ENCODE measurements at regions of chr1 and their contacts with region 1.

Region 1: GRCh38 chr1:234114648-234115307 is 210.3 kb downstream of the SLC35F3 start:
- DNase-seq: peak; percentile 61
- H3K4me3 ChIP-seq: peak overlapping the region; percentile 28 to 40 (median 33)
- H3K27ac ChIP-seq: peak overlapping the region; percentile 56
- H3K4me1 ChIP-seq: peaks cover 8% of the 10 kb centered on the region
- H3K27me3 ChIP-seq: no peaks in the 10 kb centered on the region
- CTCF ChIP-seq: peak; percentile 67

Region 2: GRCh38 chr1:233304489-233305102 is 810.2 kb before region 1 on chr1:
- CTCF ChIA-PET with region 1: no interaction called
- dilution Hi-C with region 1: no loop called
- in situ Hi-C with region 1: no loop called
- intact Hi-C with region 1: loop called (anchors 1 kb)
- DNase-seq: peak; percentile 17
- H3K4me3 ChIP-seq: no peak overlapping the region
- H3K27ac ChIP-seq: no peak overlapping the region
- H3K4me1 ChIP-seq: no peaks in the 10 kb centered on the region
- H3K27me3 ChIP-seq: peaks cover 2% of the 10 kb centered on the region
- CTCF ChIP-seq: peak; percentile 77 to 80

Region 3: GRCh38 chr1:234072793-234073192 is 42.0 kb before region 1 on chr1:
- CTCF ChIA-PET with region 1: no interaction called
- dilution Hi-C with region 1: no loop called
- in situ Hi-C with region 1: no loop called
- intact Hi-C with region 1: no loop called
- DNase-seq: no peak
- H3K4me3 ChIP-seq: no peak overlapping the region
- H3K27ac ChIP-seq: no peak overlapping the region
- H3K4me1 ChIP-seq: no peaks in the 10 kb centered on the region
- H3K27me3 ChIP-seq: no peaks in the 10 kb centered on the region
- CTCF ChIP-seq: no peak

Region 4: GRCh38 chr1:234154320-234155251 is 39.8 kb after region 1 on chr1:
- CTCF ChIA-PET with region 1: no interaction called
- dilution Hi-C with region 1: no loop called
- in situ Hi-C with region 1: no loop called
- intact Hi-C with region 1: loop called (anchors 1 kb)
- DNase-seq: peak; percentile 73
- H3K4me3 ChIP-seq: no peak overlapping the region
- H3K27ac ChIP-seq: no peak overlapping the region
- H3K4me1 ChIP-seq: peaks cover 3% of the 10 kb centered on the region
- H3K27me3 ChIP-seq: no peaks in the 10 kb centered on the region
- CTCF ChIP-seq: peak; percentile 73 to 80

Region 5: DNA sequence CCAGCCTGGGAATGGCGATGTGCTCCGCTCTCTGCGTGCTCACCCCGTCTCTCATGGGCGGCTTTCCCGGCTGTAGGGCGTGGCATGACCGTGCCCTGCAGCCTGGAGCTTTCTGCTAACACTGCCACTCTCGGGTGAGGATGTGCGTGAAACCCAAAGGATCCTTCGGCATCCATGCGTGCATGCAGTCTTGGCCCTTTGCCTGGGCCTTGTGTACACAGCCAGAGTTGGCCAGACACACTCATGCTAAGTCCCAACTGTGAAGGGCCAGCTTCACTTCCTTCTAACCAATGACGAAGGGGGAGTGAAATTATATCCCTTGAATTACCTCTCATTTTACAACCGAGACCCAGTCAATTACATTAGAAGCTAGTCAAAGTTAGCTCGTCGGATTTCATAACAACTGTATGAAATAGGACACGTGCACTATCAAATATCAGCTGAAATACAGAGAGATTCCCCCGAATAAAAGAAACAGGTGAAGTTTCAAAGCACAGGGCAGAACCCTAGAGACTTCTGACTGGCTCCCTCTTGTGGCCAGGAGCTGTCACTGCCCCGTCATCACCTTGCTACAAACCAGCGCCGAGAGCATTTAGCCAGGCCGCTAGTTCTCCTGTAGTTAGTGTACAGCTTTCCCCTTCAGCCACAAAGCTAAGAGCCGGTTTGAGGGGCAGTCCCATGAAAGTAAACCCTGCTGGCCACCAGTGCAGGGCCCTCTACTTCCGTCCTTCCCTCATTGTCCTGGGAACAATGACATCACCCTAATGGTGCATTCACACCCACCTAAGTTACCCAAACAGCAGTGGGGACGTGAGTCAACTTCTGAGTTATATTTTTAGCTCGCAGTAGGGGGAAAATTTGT is 195.1 kb after region 1 on chr1:
- CTCF ChIA-PET with region 1: no interaction called
- dilution Hi-C with region 1: no loop called
- in situ Hi-C with region 1: no loop called
- intact Hi-C with region 1: loop called (anchors 1 kb)
- DNase-seq: peak; percentile 59
- H3K4me3 ChIP-seq: no peak overlapping the region
- H3K27ac ChIP-seq: no peak overlapping the region
- H3K4me1 ChIP-seq: peaks cover 22% of the 10 kb centered on the region
- H3K27me3 ChIP-seq: no peaks in the 10 kb centered on the region
- CTCF ChIP-seq: peak; percentile 90 to 97

Region 6: GRCh38 chr1:234342774-234343173 is 228.0 kb after region 1 on chr1:
- CTCF ChIA-PET with region 1: no interaction called
- dilution Hi-C with region 1: no loop called
- in situ Hi-C with region 1: no loop called
- intact Hi-C with region 1: no loop called
- DNase-seq: no peak
- H3K4me3 ChIP-seq: no peak overlapping the region
- H3K27ac ChIP-seq: no peak overlapping the region
- H3K4me1 ChIP-seq: no peaks in the 10 kb centered on the region
- H3K27me3 ChIP-seq: no peaks in the 10 kb centered on the region
- CTCF ChIP-seq: no peak

Region 7: DNA sequence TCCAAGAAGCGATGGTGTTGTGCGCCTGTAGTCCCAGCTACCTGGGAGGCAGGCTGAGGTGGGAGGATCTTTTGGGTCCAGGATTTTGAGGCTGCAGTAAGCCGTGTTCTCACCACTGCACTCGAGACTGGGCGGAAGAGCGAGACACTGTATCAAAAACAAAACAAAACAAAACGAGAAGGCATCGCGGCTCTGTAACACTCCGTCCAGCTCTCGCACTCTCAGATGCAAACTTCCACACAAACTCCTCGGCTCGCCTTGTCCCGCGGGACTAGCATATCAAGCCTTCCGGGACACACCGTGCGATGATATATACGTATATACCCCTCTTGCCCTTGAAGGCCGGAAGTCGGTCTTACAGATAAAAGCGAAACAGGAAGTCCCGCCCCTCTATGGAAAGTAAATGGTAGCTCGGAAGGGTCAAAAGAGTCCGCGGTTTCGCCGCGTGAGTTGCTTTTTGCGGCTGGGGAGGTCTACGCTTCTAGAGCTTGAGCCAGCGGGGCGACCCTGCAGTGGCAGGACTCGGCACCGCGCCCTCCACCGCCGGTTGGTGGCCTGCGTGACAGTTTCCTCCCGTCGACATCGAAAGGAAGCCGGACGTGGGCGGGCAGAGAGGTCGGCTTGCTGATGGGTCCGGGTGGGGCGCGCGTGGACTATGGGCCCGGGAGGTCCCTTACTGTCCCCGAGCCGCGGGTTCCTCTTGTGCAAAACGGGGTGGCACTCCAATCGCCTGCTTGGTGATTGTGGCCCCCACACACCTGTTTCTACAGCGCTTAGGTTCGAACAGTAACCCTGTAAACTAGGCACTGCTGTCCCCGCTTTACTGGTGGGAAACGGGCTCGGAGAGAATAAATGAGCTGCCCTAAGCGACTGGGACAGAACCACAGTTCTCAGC is 258.5 kb after region 1 on chr1 and contains the start of gene COA6:
- CTCF ChIA-PET with region 1: no interaction called
- dilution Hi-C with region 1: no loop called
- in situ Hi-C with region 1: no loop called
- intact Hi-C with region 1: loop called (anchors 2 kb)
- DNase-seq: peak; percentile 96
- H3K4me3 ChIP-seq: peak within 1 kb of the TSS; percentile 74 to 93 (median 91)
- H3K27ac ChIP-seq: peak within 1 kb of the TSS; percentile 88
- H3K4me1 ChIP-seq: peaks cover 14% of the 10 kb centered on the region
- H3K27me3 ChIP-seq: no peaks in the 10 kb centered on the region
- CTCF ChIP-seq: no peak
- total RNA-seq, gene COA6: 10.3 to 43.4 TPM

Region 8: GRCh38 chr1:235093696-235094592 is 979.2 kb after region 1 on chr1:
- CTCF ChIA-PET with region 1: no interaction called
- dilution Hi-C with region 1: no loop called
- in situ Hi-C with region 1: loop called in 1 of 2 experiments (anchors 25 kb)
- intact Hi-C with region 1: no loop called
- DNase-seq: no peak
- H3K4me3 ChIP-seq: no peak overlapping the region
- H3K27ac ChIP-seq: no peak overlapping the region
- H3K4me1 ChIP-seq: no peaks in the 10 kb centered on the region
- H3K27me3 ChIP-seq: no peaks in the 10 kb centered on the region
- CTCF ChIP-seq: peak; percentile 90 to 92

Measured in mammary epithelial cell (primary cell).